Ascending aorta (tissue), 2 donors: ENCODE measurements at regions of chr2 and their contacts with region 1.

Region 1: DNA sequence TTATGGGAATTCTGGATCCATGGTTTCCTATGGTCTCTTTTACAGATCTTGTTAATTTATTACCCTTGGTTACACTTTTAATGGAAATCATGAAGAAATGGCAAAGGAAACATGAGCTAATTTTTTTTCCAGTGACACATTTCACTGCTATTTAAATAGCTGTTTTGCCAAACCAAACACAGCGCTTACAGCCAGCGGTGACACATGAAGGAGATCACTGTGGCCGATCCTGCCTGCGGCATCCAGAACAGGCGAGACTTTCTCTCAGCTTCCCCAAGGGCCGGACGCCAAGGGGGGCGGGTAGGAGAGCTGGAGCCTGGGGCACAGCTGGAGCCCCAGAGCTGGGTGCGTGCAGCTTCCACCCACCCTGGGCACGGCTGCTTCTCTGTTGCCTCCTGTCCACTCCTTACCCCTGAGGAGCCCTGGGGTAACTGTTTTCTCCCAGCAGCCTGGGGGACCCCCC is 81.4 kb upstream of the PKDCC start:
- DNase-seq: peak; percentile 68 to 96
- H3K4me3 ChIP-seq: peak overlapping the region in 1 of 2 donors; percentile 33
- H3K27ac ChIP-seq: peak overlapping the region; percentile 90 to 91
- H3K4me1 ChIP-seq: peaks cover 22 to 55% of the 10 kb centered on the region in 2 donors
- H3K27me3 ChIP-seq: no peaks in the 10 kb centered on the region
- CTCF ChIP-seq: no peak

Region 2: GRCh38 chr2:41869542-41870264 is 96.8 kb before region 1 on chr2:
- intact Hi-C with region 1: loop called (anchors 5 kb)
- DNase-seq: peak in 1 of 2 donors; percentile 85
- H3K4me3 ChIP-seq: no peak overlapping the region
- H3K27ac ChIP-seq: no peak overlapping the region
- H3K4me1 ChIP-seq: peaks cover 4 to 17% of the 10 kb centered on the region in 2 donors
- H3K27me3 ChIP-seq: no peaks in the 10 kb centered on the region
- CTCF ChIP-seq: peak; percentile 76 to 92 (median 88)

Region 3: DNA sequence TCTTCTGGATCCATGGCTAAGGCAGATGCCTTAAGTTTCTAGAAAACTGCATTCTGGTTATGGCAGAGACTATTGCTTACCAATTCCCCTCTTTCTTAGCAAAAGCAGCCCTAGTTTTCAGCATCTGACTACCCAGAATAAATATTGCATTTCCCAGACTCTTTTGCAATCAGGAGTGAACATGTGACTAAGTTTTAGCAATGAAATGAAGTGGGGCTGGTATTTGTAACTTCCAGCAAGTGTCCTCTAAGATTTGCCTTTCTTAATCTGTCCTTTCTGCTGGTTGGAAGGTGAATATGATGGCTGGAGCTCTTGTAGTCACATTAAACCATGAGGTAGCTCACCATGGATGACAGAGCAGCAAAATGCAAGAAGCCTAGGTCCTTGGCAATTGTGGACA is 51.5 kb before region 1 on chr2:
- intact Hi-C with region 1: loop called (anchors 2 kb)
- DNase-seq: no peak
- H3K4me3 ChIP-seq: no peak overlapping the region
- H3K27ac ChIP-seq: peak overlapping the region in 1 of 2 donors; percentile 19
- H3K4me1 ChIP-seq: peaks cover 0 to 11% of the 10 kb centered on the region in 2 donors
- H3K27me3 ChIP-seq: no peaks in the 10 kb centered on the region
- CTCF ChIP-seq: no peak

Region 4: DNA sequence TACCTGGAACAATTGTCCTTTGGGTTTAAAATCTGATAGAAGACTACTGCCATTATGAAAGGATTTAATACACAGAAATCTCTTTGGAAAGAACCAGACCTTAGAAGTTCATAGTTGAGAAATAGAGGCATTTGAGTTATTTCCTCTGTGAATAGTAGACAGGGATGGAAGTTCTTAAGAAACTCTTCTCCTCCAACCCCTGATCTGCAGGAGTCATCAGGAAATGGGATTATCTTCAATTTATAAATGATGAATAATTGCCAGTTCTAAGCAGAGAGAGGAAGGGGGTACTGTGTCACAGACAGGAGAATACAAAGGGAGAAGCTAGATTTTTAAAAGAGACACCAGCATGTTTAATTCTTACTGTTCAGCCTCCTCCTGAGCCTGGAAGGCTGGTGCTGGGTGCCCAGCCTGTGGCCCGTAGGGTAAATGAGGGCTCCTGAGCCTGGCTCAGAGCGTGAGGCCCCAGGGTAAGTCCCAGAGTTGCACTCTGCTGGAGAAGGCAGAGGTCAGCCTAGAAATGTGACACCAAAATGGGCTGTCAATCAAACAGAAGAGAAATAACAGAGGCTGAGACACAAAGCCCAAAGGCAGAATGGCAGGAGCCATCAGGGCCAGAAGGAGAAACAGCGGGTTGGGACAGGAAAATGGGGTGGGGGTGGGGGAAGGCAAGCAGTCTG is 23.2 kb after region 1 on chr2:
- intact Hi-C with region 1: loop called (anchors 2 kb)
- DNase-seq: no peak
- H3K4me3 ChIP-seq: no peak overlapping the region
- H3K27ac ChIP-seq: peak overlapping the region; percentile 84 to 94
- H3K4me1 ChIP-seq: peaks cover 8 to 21% of the 10 kb centered on the region in 2 donors
- H3K27me3 ChIP-seq: no peaks in the 10 kb centered on the region
- CTCF ChIP-seq: no peak

Region 5: DNA sequence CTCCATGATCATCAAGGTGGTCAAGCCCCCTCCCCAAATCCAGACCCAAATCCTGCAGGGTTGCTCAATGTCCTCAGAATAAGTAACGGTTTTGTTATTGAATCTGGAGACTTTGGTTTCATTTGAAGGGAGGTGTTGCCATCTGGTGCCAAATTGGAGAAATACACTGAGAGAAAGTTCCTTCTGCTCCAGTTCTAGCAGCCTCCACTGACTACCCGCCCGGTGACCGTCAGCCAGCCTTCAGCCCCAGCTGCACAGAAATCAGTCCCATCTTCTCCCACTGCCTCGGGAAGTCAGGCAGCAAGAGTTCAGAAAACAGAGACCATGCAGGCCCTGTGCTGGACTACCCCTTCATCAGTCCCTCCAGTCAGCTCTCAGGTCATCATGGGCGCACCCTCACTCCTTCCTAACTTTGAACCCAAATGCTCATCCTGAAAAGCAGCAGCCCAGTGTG is 120.1 kb after region 1 on chr2:
- intact Hi-C with region 1: loop called (anchors 1 kb)
- DNase-seq: peak in 1 of 2 donors; percentile 76
- H3K4me3 ChIP-seq: no peak overlapping the region
- H3K27ac ChIP-seq: no peak overlapping the region
- H3K4me1 ChIP-seq: peaks cover 0 to 10% of the 10 kb centered on the region in 2 donors
- H3K27me3 ChIP-seq: no peaks in the 10 kb centered on the region
- CTCF ChIP-seq: peak; percentile 77 to 83 (median 79)